WTC11 (cell line): ENCODE measurements at regions of chr17 and their contacts with region 1.

Region 1: GRCh38 chr17:37067555-37068111 is 118.9 kb downstream of the AATF start:
- DNase-seq: no peak
- ATAC-seq: peak; percentile 23
- H3K4me3 Mint-ChIP-seq: peak overlapping the region; percentile 63; the same call in 1 of the 2 replicates
- H3K27ac Mint-ChIP-seq: peak overlapping the region; percentile 95
- H3K4me1 Mint-ChIP-seq: peaks cover 59% of the 10 kb centered on the region
- H3K27me3 Mint-ChIP-seq: peaks cover 8% of the 10 kb centered on the region; the same call in 1 of the 2 replicates
- CTCF ChIP-seq: no peak

Region 2: GRCh38 chr17:36980280-36980761 is 87.3 kb before region 1 on chr17:
- CTCF ChIA-PET with region 1: no interaction called
- POLR2A ChIA-PET with region 1: no interaction called
- DNase-seq: no peak
- ATAC-seq: no peak
- H3K4me3 Mint-ChIP-seq: no peak overlapping the region
- H3K27ac Mint-ChIP-seq: peak overlapping the region; percentile 13
- H3K4me1 Mint-ChIP-seq: peaks cover 15% of the 10 kb centered on the region; the same call in 1 of the 2 replicates
- H3K27me3 Mint-ChIP-seq: no peaks in the 10 kb centered on the region
- CTCF ChIP-seq: no peak

Region 3: DNA sequence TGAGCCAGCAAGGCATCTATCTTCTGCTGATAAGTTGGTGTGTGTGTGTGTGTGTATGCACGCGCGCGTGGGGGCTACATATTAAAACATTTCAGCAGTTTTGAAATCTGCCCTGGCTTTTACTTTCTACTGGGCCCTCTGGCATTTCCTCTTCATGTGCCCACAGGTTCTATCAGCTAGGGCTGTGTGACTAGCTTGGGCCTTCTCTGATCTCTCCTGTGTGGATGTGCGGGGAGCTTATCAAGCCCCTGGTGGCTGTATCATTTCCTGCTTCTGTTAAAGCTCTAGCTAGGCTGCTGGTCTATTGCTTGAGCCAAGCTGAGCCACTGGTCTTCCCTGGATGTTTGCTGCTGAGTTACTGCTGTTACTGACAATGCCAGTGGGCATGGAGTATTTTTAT is 13.7 kb after region 1 on chr17:
- CTCF ChIA-PET with region 1: interaction called, 10 read pairs
- POLR2A ChIA-PET with region 1: interaction called, 3 read pairs
- DNase-seq: no peak
- ATAC-seq: peak; percentile 57
- H3K4me3 Mint-ChIP-seq: no peak overlapping the region
- H3K27ac Mint-ChIP-seq: peak overlapping the region; percentile 60; the same call in 1 of the 2 replicates
- H3K4me1 Mint-ChIP-seq: peaks cover 37% of the 10 kb centered on the region
- H3K27me3 Mint-ChIP-seq: no peaks in the 10 kb centered on the region
- CTCF ChIP-seq: no peak

Region 4: GRCh38 chr17:37092071-37092470 is 24.4 kb after region 1 on chr17:
- CTCF ChIA-PET with region 1: no interaction called
- POLR2A ChIA-PET with region 1: no interaction called
- DNase-seq: no peak
- ATAC-seq: no peak
- H3K4me3 Mint-ChIP-seq: no peak overlapping the region
- H3K27ac Mint-ChIP-seq: peak overlapping the region; percentile 42; the same call in 1 of the 2 replicates
- H3K4me1 Mint-ChIP-seq: peaks cover 13% of the 10 kb centered on the region
- H3K27me3 Mint-ChIP-seq: no peaks in the 10 kb centered on the region
- CTCF ChIP-seq: no peak

Region 5: GRCh38 chr17:37117373-37118142 is 49.9 kb after region 1 on chr17:
- CTCF ChIA-PET with region 1: no interaction called
- POLR2A ChIA-PET with region 1: no interaction called
- DNase-seq: no peak
- ATAC-seq: peak; percentile 49
- H3K4me3 Mint-ChIP-seq: no peak overlapping the region
- H3K27ac Mint-ChIP-seq: peak overlapping the region; percentile 82
- H3K4me1 Mint-ChIP-seq: peaks cover 42% of the 10 kb centered on the region
- H3K27me3 Mint-ChIP-seq: no peaks in the 10 kb centered on the region
- CTCF ChIP-seq: no peak

Region 6: GRCh38 chr17:37476431-37477120 is 408.9 kb after region 1 on chr17:
- CTCF ChIA-PET with region 1: no interaction called
- POLR2A ChIA-PET with region 1: no interaction called
- DNase-seq: no peak
- ATAC-seq: no peak
- H3K4me3 Mint-ChIP-seq: no peak overlapping the region
- H3K27ac Mint-ChIP-seq: no peak overlapping the region
- H3K4me1 Mint-ChIP-seq: peaks cover 9% of the 10 kb centered on the region
- H3K27me3 Mint-ChIP-seq: no peaks in the 10 kb centered on the region
- CTCF ChIP-seq: no peak